ENCODE measurements at regions of chr17 and their contacts with region 1.

Region 1: GRCh38 chr17:48024937-48025906 is 12.4 kb downstream of the COPZ2 start:
- DNase-seq: peak; percentile 95 to 97
- H3K4me3 ChIP-seq: peak overlapping the region; percentile 37 to 40
- H3K27ac ChIP-seq: peak overlapping the region; percentile 64 to 67
- H3K4me1 ChIP-seq: peaks cover 6 to 31% of the 10 kb centered on the region in 2 donors
- H3K27me3 ChIP-seq: peaks cover 7 to 9% of the 10 kb centered on the region in 2 donors
- CTCF ChIP-seq: peak; percentile 93 to 95 (median 94)
- POLR2A ChIP-seq: peak in 1 of 2 donors; percentile 35

Region 2: GRCh38 chr17:48071654-48072053 is 46.4 kb after region 1 on chr17:
- intact Hi-C with region 1: loop called (anchors 2 kb)
- DNase-seq: no peak
- H3K4me3 ChIP-seq: no peak overlapping the region
- H3K27ac ChIP-seq: no peak overlapping the region
- H3K4me1 ChIP-seq: no peaks in the 10 kb centered on the region
- H3K27me3 ChIP-seq: no peaks in the 10 kb centered on the region
- CTCF ChIP-seq: no peak
- POLR2A ChIP-seq: no peak

Region 3: DNA sequence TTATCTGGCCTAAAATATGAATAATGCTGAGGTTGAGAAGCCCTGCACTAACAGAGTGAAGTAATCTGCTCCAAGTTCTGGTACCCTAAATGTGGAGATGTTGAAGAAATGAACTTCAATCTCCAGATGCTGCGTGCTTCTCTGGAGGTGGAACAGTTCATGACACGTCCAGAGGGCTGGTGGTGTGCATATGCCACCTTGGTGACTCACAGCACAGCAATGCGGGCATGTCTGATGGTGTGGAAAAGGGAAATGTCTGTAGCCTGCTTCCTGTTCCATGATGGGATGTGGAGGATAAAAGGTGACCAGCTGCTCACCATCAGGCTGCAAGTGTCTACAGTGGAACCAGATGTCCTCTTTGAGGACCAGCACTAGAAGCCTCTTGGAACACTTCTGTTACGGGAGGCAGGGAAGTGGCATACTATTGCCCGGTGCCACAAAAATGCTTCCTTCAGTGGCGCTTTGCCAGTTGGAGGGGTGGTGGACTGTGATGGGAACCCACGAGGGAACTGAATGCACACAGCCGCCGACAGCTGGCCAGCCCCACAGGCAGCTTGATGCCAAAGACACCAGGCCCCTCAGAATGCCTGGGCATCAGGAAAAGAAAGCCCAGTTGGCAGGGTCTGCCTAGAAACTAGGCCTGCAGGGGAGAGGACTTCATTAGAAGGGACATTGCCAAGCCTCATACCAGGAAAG is 102.3 kb after region 1 on chr17:
- intact Hi-C with region 1: loop called (anchors 5 kb)
- DNase-seq: no peak
- H3K4me3 ChIP-seq: no peak overlapping the region
- H3K27ac ChIP-seq: no peak overlapping the region
- H3K4me1 ChIP-seq: no peaks in the 10 kb centered on the region
- H3K27me3 ChIP-seq: no peaks in the 10 kb centered on the region
- CTCF ChIP-seq: no peak
- POLR2A ChIP-seq: no peak

Measured in uterus (tissue), 4 donors.